Sigmoid colon (tissue), 7 donors: ENCODE measurements at regions of chr5 and their contacts with region 1.

Region 1: DNA sequence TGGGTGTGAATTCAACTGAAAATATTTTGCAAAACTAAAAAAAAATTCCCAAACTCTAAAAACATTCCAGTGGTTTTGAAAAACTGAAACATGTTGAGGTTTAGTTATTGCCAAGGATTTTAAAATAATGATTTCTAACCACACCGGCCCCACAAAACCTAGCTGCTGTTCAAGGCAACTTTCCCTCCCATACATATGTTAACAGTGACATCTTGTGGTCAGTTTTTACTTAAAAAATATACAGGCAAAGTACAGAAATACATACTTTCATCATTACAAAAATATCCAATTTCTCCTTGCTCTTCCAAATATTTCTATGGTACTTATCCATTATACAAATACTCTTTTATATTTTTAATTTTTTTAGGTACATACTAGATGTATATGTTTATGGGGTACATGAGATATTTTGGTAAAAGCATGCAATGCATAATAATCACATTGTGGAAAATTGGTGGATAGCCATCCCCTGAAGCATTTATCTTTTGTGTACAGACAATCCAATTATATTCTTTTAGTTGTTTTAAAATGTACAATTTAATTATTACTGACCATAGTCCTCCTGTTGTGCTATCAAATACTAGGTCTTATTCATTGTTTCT is 34.4 kb upstream of the MRPS30 start:
- DNase-seq: no peak
- H3K4me3 ChIP-seq: no peak overlapping the region
- H3K27ac ChIP-seq: no peak overlapping the region
- H3K4me1 ChIP-seq: no peaks in the 10 kb centered on the region
- H3K27me3 ChIP-seq: no peaks in the 10 kb centered on the region
- CTCF ChIP-seq: peak; percentile 15 to 48 (median 33)
- EP300 ChIP-seq: no peak
- POLR2A ChIP-seq: no peak

Region 2: GRCh38 chr5:43631182-43631910 is 1143.0 kb before region 1 on chr5:
- intact Hi-C with region 1: loop called (anchors 10 kb)
- DNase-seq: peak; percentile 71
- H3K4me3 ChIP-seq: no peak overlapping the region
- H3K27ac ChIP-seq: peak overlapping the region; percentile 36 to 75 (median 59)
- H3K4me1 ChIP-seq: peaks cover 0 to 55% (median 45%) of the 10 kb centered on the region in 4 donors
- H3K27me3 ChIP-seq: no peaks in the 10 kb centered on the region
- CTCF ChIP-seq: peak; percentile 46 to 63 (median 52)
- EP300 ChIP-seq: no peak
- POLR2A ChIP-seq: no peak

Region 3: DNA sequence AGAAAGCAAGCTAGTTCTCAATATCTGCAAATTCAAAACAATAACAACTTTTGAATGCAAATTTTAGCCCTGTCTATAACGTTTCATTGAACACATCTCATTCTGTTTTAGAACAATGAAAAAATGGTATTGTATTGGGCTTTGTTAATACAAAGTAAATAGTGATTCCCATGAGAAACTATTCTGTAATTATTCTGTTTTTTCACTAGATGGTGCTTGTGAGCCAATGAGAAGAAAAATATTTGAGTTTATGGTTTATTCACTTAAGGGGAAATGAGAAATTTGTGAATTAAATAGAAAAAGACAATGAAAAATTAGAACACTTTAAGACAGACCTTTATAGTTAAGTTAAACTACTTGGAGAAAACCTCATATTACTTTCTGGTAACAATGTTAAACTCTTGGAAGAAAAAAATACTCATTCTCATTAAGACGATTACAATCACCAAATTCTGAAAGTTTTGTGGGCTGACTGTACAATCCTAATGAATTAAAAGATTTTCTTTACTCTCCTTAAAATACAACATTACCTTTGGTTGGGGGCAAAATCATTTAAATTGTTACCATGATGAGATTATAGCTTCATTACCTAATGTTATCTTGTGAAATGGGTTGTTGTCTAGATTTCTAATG is 1044.4 kb before region 1 on chr5:
- intact Hi-C with region 1: loop called (anchors 5 kb)
- DNase-seq: no peak
- H3K4me3 ChIP-seq: no peak overlapping the region
- H3K27ac ChIP-seq: no peak overlapping the region
- H3K4me1 ChIP-seq: peaks cover 0 to 9% (median 4%) of the 10 kb centered on the region in 4 donors
- H3K27me3 ChIP-seq: no peaks in the 10 kb centered on the region
- CTCF ChIP-seq: peak in 3 of 4 experiments; percentile 11 to 56 (median 51)
- EP300 ChIP-seq: no peak
- POLR2A ChIP-seq: no peak

Region 4: DNA sequence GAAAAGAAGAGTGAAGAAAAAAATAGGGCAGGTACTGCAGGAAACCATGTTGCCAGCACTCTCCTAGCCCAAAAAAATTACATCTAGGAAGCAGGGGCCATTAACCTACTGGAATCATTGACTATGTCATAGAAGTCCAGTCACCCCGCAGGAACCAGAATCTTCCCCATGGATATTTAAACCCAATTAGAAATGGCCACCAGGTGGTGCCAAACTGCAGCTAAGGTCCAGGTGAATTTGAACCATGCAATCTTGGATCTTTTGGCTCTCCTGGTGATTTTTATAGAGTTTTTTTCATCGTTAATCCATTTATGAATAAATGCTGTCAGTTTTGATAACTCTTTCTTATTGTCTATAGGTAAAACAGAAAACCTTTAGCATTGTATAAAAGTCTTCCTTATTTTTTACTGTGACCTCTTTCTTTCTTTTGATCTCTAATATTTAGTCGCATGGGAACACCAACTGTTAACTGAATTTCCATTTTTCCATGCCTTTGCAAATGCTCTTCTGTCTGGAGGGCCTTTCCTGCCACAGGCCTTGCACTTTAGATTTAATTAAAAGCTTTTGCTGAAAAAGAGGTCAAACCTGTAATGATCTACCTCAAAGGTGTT is 237.6 kb before region 1 on chr5:
- intact Hi-C with region 1: loop called (anchors 10 kb)
- DNase-seq: no peak
- H3K4me3 ChIP-seq: no peak overlapping the region
- H3K27ac ChIP-seq: no peak overlapping the region
- H3K4me1 ChIP-seq: no peaks in the 10 kb centered on the region
- H3K27me3 ChIP-seq: no peaks in the 10 kb centered on the region
- CTCF ChIP-seq: peak in 3 of 4 experiments; percentile 17 to 62 (median 31)
- EP300 ChIP-seq: no peak
- POLR2A ChIP-seq: no peak